ENCODE measurements at regions of chr17 and their contacts with region 1.

Region 1: GRCh38 chr17:31068291-31068690 is 26.5 kb upstream of the NF1 start:
- DNase-seq: peak; percentile 45
- H3K4me3 ChIP-seq: no peak overlapping the region
- H3K27ac ChIP-seq: peak overlapping the region; percentile 58
- H3K4me1 ChIP-seq: peaks cover 35% of the 10 kb centered on the region
- H3K27me3 ChIP-seq: no peaks in the 10 kb centered on the region
- CTCF ChIP-seq: peak; percentile 32 to 56

Region 2: DNA sequence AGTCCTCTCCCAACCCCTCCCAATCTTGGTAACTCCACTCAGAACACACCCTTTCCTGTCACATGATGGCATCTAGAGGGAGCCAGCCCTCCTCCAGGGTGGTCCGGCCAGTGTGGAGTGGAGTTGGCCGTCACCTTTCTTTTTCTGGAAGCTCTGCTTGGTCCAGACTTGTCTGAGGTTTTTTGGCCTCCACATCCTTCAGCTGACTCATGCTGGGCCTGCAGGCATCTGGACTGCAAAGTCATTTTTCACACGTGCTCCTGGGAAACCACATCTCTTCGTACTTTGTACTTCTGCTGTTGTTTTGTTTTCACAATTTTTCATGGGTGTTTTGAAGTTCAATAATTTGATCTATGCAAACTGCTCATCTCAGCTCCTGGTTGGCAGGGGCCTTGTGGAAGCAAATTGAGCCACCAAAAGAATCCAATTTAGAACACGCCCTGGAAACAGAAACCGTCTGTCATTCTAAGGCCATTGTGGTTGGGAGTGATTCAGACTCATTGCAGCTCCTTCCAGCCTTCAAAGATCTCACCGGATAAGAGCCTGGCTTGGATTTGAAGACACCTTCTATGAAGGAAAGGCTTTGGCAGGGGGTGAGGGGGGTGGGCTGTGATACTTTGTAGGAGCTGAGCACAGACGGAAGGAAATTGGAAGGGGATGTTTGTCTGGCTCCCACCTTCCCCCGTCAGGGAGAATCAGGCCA is 16.0 kb before region 1 on chr17:
- CTCF ChIA-PET with region 1: interaction called, 3 read pairs
- dilution Hi-C with region 1: no loop called
- in situ Hi-C with region 1: no loop called
- intact Hi-C with region 1: loop called (anchors 1 kb)
- DNase-seq: peak; percentile 99
- H3K4me3 ChIP-seq: peak overlapping the region; percentile 5 to 30 (median 23)
- H3K27ac ChIP-seq: peak overlapping the region; percentile 86
- H3K4me1 ChIP-seq: peaks cover 19% of the 10 kb centered on the region
- H3K27me3 ChIP-seq: no peaks in the 10 kb centered on the region
- CTCF ChIP-seq: no peak

Measured in mammary epithelial cell (primary cell).